ENCODE measurements at regions of chr6 and their contacts with region 1.

Region 1: GRCh38 chr6:157764178-157765033 is 58.6 kb upstream of the SNX9 start:
- DNase-seq: peak; percentile 80
- H3K4me3 Mint-ChIP-seq: peak overlapping the region; percentile 34
- H3K27ac Mint-ChIP-seq: peak overlapping the region; percentile 98
- H3K4me1 Mint-ChIP-seq: peaks cover 82% of the 10 kb centered on the region
- H3K27me3 Mint-ChIP-seq: peaks cover 10% of the 10 kb centered on the region

Region 2: GRCh38 chr6:157368359-157369049 is 395.9 kb before region 1 on chr6:
- intact Hi-C with region 1: loop called (anchors 1 kb)
- DNase-seq: no peak
- H3K4me3 Mint-ChIP-seq: no peak overlapping the region
- H3K27ac Mint-ChIP-seq: peak overlapping the region; percentile 52
- H3K4me1 Mint-ChIP-seq: peaks cover 20% of the 10 kb centered on the region
- H3K27me3 Mint-ChIP-seq: peaks cover 46% of the 10 kb centered on the region

Region 3: DNA sequence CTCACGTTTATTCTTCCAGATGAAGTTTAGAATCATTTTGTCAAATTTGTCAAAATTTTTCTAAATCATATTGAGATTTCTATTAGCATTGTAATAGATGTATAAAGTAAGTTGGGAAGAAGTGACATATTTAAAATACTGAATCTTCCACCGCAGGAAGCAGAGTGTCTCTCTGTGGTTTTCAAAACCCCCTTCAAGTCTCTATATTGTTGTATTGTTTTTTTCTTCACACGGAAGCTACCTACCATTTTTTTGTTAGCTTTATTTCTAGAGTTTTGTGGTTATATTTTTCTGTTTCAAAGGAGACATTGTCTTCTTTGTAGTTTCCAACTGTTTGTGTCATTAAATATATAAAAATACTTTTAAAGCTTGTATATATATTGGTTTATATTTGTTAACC is 194.9 kb before region 1 on chr6:
- intact Hi-C with region 1: loop called (anchors 2 kb)
- DNase-seq: no peak
- H3K4me3 Mint-ChIP-seq: peak overlapping the region; percentile 47
- H3K27ac Mint-ChIP-seq: peak overlapping the region; percentile 4
- H3K4me1 Mint-ChIP-seq: peaks cover 24% of the 10 kb centered on the region
- H3K27me3 Mint-ChIP-seq: peaks cover 14% of the 10 kb centered on the region

Region 4: GRCh38 chr6:157861814-157862213 is 97.4 kb after region 1 on chr6:
- intact Hi-C with region 1: loop called (anchors 1 kb)
- DNase-seq: no peak
- H3K4me3 Mint-ChIP-seq: no peak overlapping the region
- H3K27ac Mint-ChIP-seq: no peak overlapping the region
- H3K4me1 Mint-ChIP-seq: peaks cover 52% of the 10 kb centered on the region
- H3K27me3 Mint-ChIP-seq: peaks cover 13% of the 10 kb centered on the region

Region 5: GRCh38 chr6:157981395-157982296 is 217.2 kb after region 1 on chr6 and contains the start of gene SYNJ2:
- intact Hi-C with region 1: loop called (anchors 2 kb)
- DNase-seq: peak; percentile 85
- H3K4me3 Mint-ChIP-seq: peak within 1 kb of the TSS; percentile 95
- H3K27ac Mint-ChIP-seq: peak within 1 kb of the TSS; percentile 84
- H3K4me1 Mint-ChIP-seq: peaks cover 49% of the 10 kb centered on the region
- H3K27me3 Mint-ChIP-seq: peaks cover 10% of the 10 kb centered on the region
- total RNA-seq, gene SYNJ2: 29.0 and 31.2 TPM in 2 replicates

Region 6: DNA sequence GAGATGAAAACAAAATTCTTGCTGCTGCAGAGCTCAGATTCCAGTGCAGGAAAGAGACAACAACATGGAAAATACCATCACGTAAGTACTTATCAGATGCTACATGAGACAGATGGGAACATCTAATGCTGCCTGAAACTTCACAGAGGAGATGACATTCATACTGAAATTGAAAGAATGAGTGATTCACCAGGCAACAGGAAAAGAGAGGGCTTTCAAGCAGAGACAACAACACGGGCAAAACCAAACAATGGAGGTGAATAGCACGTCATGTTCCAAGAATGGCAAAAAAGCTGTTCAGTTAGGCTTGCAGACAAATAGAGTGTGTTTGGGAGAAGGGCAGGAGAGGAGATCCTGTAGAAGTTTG is 443.0 kb after region 1 on chr6:
- intact Hi-C with region 1: loop called (anchors 5 kb)
- DNase-seq: peak; percentile 68
- H3K4me3 Mint-ChIP-seq: peak overlapping the region; percentile 56
- H3K27ac Mint-ChIP-seq: peak overlapping the region; percentile 96
- H3K4me1 Mint-ChIP-seq: peaks cover 63% of the 10 kb centered on the region
- H3K27me3 Mint-ChIP-seq: no peaks in the 10 kb centered on the region

Measured in activated T-helper 1 cell treated with anti-CD3 and anti-CD28 coated beads, Interleukin-12 subunit alpha, Interleukin-12 subunit beta, Interleukin-2, Interleukin-4 antibody, amounts not matched to agents 30 ng/mL and 10 ng/mL and 1 ng/mL, durations not matched to agents 14 hours and 24 hours and 36 hours (primary cell).